ENCODE measurements at regions of chr7 and their contacts with region 1.

Region 1: GRCh38 chr7:44847508-44847920 is 373 bp downstream of the H2AZ2 start:
- DNase-seq: peak; percentile 96
- ATAC-seq: peak; percentile 64
- H3K4me3 ChIP-seq: peak overlapping the region; percentile 67 to 97 (median 76)
- H3K4me3 Mint-ChIP-seq: peak overlapping the region; percentile 99
- H3K27ac ChIP-seq: peak overlapping the region; percentile 94
- H3K27ac Mint-ChIP-seq: peak overlapping the region; percentile 100
- H3K4me1 ChIP-seq: peaks cover 16 to 24% of the 10 kb centered on the region in 2 donors
- H3K4me1 Mint-ChIP-seq: peaks cover 31% of the 10 kb centered on the region
- H3K27me3 ChIP-seq: no peaks in the 10 kb centered on the region
- H3K27me3 Mint-ChIP-seq: no peaks in the 10 kb centered on the region
- CTCF ChIP-seq: peak; percentile 89

Region 2: DNA sequence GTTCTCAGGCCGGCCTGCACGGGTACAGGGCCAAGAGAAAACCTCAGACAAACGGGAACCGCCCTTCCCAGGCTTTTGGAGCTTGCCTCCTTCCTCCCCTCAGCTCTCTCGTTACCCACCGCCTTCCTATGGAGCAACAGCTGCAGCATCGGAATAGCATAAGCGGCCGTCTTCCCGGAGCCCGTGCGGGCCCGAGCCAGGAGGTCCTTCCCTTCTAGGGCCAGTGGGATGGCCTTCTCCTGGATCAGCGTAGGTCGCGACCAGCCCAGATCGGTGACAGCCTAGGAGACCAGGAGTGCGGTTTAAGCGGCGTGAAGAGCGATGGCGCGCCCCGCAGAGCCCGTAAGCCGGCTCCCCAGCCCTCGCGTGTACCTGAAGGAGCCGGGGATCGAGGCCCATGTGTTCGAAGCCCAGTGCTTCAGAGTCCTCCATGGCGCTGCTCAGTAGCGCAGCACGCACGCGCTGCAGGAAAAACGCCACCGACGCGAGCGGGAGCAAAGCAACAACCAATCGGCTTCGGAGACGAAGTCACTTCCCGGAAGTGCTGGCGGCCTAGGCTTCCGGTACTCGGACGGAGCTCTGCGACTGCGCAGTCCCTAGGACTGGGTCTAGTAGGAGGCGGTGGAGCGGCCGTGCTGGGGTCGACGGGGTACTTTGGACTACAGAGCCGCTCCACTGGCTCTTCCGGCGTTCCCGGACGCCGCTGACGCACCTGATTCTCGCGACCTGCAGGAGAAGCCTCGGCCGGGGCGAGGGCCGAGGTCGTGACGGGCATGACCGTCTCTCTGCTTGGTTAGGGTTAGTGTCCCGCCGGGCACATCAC is 273.8 kb before region 1 on chr7 and contains the start of gene DDX56:
- CTCF ChIA-PET with region 1: interaction called, 9 read pairs
- POLR2A ChIA-PET with region 1: interaction called, 11 read pairs
- intact Hi-C with region 1: no loop called
- DNase-seq: peak; percentile 94
- ATAC-seq: peak; percentile 97
- H3K4me3 ChIP-seq: peak within 1 kb of the TSS; percentile 60 to 94 (median 84)
- H3K4me3 Mint-ChIP-seq: peak within 1 kb of the TSS; percentile 98
- H3K27ac ChIP-seq: peak within 1 kb of the TSS; percentile 84 to 93
- H3K27ac Mint-ChIP-seq: peak within 1 kb of the TSS; percentile 97
- H3K4me1 ChIP-seq: peaks cover 23 to 29% of the 10 kb centered on the region in 2 donors
- H3K4me1 Mint-ChIP-seq: peaks cover 38% of the 10 kb centered on the region
- H3K27me3 ChIP-seq: no peaks in the 10 kb centered on the region
- H3K27me3 Mint-ChIP-seq: no peaks in the 10 kb centered on the region
- CTCF ChIP-seq: no peak
- total RNA-seq, gene DDX56: 102 and 104 TPM in 2 replicates

Region 3: GRCh38 chr7:44638611-44639557 is 208.6 kb before region 1 on chr7:
- CTCF ChIA-PET with region 1: interaction called, 12 read pairs
- POLR2A ChIA-PET with region 1: interaction called, 4 read pairs
- intact Hi-C with region 1: no loop called
- DNase-seq: peak; percentile 72
- ATAC-seq: peak; percentile 87
- H3K4me3 ChIP-seq: peak overlapping the region in 1 of 5 experiments; percentile 31
- H3K4me3 Mint-ChIP-seq: peak overlapping the region; percentile 84
- H3K27ac ChIP-seq: peak overlapping the region; percentile 83 to 93
- H3K27ac Mint-ChIP-seq: peak overlapping the region; percentile 99
- H3K4me1 ChIP-seq: peaks cover 44 to 69% of the 10 kb centered on the region in 2 donors
- H3K4me1 Mint-ChIP-seq: peaks cover 59% of the 10 kb centered on the region
- H3K27me3 ChIP-seq: no peaks in the 10 kb centered on the region
- H3K27me3 Mint-ChIP-seq: no peaks in the 10 kb centered on the region
- CTCF ChIP-seq: no peak

Region 4: GRCh38 chr7:44858161-44858560 is 10.6 kb after region 1 on chr7:
- CTCF ChIA-PET with region 1: interaction called, 14 read pairs
- POLR2A ChIA-PET with region 1: interaction called, 3 read pairs
- intact Hi-C with region 1: loop called (anchors 1 kb)
- DNase-seq: no peak
- ATAC-seq: no peak
- H3K4me3 ChIP-seq: no peak overlapping the region
- H3K4me3 Mint-ChIP-seq: no peak overlapping the region
- H3K27ac ChIP-seq: no peak overlapping the region
- H3K27ac Mint-ChIP-seq: no peak overlapping the region
- H3K4me1 ChIP-seq: no peaks in the 10 kb centered on the region
- H3K4me1 Mint-ChIP-seq: peaks cover 4% of the 10 kb centered on the region
- H3K27me3 ChIP-seq: no peaks in the 10 kb centered on the region
- H3K27me3 Mint-ChIP-seq: peaks cover 5% of the 10 kb centered on the region
- CTCF ChIP-seq: peak; percentile 43

Region 5: DNA sequence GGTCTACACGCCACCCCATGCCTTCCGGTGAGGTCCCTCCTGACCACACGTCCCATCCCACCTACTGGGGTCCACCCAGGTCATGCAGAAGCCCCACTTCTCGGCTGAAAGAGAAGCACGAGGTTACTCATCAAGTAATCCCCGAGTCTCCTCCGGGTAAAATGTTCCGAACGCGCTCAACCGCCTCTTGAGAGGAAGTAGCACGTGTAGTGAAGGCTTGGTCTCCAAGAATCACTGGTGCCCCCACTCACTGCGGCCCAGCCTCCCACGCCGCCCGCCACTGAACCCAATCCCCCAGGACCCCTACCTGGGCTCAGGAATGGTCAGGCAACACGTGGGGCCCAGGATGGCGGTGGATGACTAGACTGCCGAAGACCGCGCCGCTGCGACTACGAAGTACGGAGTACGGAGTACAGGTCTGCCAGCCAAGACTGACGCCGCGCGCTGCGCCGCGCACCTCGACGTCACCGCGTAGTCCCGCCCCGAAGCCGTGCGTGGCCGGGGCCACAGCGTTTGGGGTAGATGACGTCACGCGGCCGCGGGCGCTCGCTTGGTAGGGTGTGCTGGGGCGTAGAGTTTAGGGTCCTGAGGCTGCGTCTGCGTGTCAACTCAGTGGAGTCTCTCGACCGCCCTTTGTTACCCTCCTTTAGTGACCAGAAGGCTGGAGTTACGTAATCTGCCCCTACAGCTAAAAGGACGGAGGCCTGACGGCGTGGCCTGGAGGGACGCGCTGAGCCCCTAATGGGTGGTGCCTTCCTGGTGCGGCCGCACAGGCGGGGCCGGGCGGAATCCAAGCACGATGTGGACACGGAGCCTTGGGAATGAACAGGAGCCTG is 138.9 kb after region 1 on chr7:
- CTCF ChIA-PET with region 1: no interaction called
- POLR2A ChIA-PET with region 1: no interaction called
- intact Hi-C with region 1: loop called (anchors 5 kb)
- DNase-seq: peak; percentile 98
- ATAC-seq: peak; percentile 94
- H3K4me3 ChIP-seq: peak overlapping the region; percentile 62 to 92 (median 73)
- H3K4me3 Mint-ChIP-seq: peak overlapping the region; percentile 98
- H3K27ac ChIP-seq: peak overlapping the region; percentile 97 to 98
- H3K27ac Mint-ChIP-seq: peak overlapping the region; percentile 98
- H3K4me1 ChIP-seq: peaks cover 29 to 39% of the 10 kb centered on the region in 2 donors
- H3K4me1 Mint-ChIP-seq: peaks cover 51% of the 10 kb centered on the region
- H3K27me3 ChIP-seq: no peaks in the 10 kb centered on the region
- H3K27me3 Mint-ChIP-seq: no peaks in the 10 kb centered on the region
- CTCF ChIP-seq: no peak

Region 6: GRCh38 chr7:45035893-45036292 is 188.4 kb after region 1 on chr7:
- CTCF ChIA-PET with region 1: no interaction called
- POLR2A ChIA-PET with region 1: no interaction called
- intact Hi-C with region 1: no loop called
- DNase-seq: no peak
- ATAC-seq: no peak
- H3K4me3 ChIP-seq: no peak overlapping the region
- H3K4me3 Mint-ChIP-seq: peak overlapping the region; percentile 52
- H3K27ac ChIP-seq: peak overlapping the region in 1 of 2 donors; percentile 43
- H3K27ac Mint-ChIP-seq: peak overlapping the region; percentile 65
- H3K4me1 ChIP-seq: peaks cover 40 to 63% of the 10 kb centered on the region in 2 donors
- H3K4me1 Mint-ChIP-seq: peaks cover 62% of the 10 kb centered on the region
- H3K27me3 ChIP-seq: no peaks in the 10 kb centered on the region
- H3K27me3 Mint-ChIP-seq: no peaks in the 10 kb centered on the region
- CTCF ChIP-seq: no peak

Region 7: DNA sequence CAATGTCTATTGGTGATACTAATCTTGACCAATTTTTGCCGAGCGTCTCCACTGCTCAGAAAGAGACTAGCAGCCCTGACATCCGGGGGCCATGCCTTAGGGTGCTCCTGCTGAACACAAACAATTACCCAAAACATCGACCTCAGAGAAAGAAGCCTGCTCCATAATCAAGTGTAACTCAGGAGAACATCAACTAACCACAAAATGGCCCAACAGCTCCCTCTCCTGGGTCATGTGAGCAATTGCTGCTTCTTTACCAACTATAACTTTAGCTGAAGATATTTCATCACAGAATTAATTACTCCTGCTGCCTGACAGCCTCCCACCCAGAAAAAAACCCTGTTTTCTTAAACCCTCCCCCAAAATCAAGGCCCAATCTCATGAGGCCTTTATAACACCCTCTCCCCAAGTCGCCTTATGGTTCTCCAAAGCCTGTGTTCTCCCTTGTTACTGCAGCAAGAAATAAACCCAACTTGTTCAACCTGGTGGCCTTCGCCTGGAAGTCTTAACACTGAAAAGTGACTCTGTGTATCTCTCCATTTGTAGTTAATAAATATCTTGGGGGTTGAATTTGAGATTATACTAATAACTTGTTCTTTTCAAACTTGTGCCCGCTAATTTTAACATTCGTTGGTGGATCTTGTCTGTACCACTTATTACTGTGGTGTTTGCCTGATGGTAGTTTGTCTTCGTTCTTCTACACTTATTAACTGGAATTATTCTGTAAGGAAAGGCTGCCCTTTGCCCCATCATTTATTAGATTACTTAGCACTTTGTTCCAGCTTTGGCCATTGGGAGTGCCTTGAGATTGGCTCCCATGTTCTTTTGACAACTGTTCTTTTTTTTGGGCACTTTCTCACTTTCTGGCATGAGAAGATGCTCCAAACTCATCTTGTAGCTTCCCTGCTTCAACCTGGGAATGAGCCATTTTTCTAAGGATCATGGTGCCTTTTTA is 288.9 kb after region 1 on chr7:
- CTCF ChIA-PET with region 1: interaction called, 54 read pairs
- POLR2A ChIA-PET with region 1: interaction called, 6 read pairs
- intact Hi-C with region 1: loop called (anchors 2 kb)
- DNase-seq: peak; percentile 80
- ATAC-seq: peak; percentile 97
- H3K4me3 ChIP-seq: no peak overlapping the region
- H3K4me3 Mint-ChIP-seq: no peak overlapping the region
- H3K27ac ChIP-seq: no peak overlapping the region
- H3K27ac Mint-ChIP-seq: no peak overlapping the region
- H3K4me1 ChIP-seq: peaks cover 5 to 18% of the 10 kb centered on the region in 2 donors
- H3K4me1 Mint-ChIP-seq: peaks cover 17% of the 10 kb centered on the region
- H3K27me3 ChIP-seq: peaks cover 0 to 3% (median 0%) of the 10 kb centered on the region in 4 experiments
- H3K27me3 Mint-ChIP-seq: no peaks in the 10 kb centered on the region
- CTCF ChIP-seq: peak; percentile 91

Measured in B cell (primary cell).